ENCODE measurements at regions of chr7 and their contacts with region 1.

Region 1: GRCh38 chr7:55365675-55366460 is 731 bp downstream of the LANCL2 start:
- DNase-seq: peak; percentile 98
- H3K4me3 Mint-ChIP-seq: peak overlapping the region; percentile 96
- H3K27ac Mint-ChIP-seq: peak overlapping the region; percentile 96
- H3K4me1 Mint-ChIP-seq: peaks cover 32% of the 10 kb centered on the region
- H3K27me3 Mint-ChIP-seq: peaks cover 1% of the 10 kb centered on the region

Region 2: GRCh38 chr7:54758702-54759592 is 606.9 kb before region 1 on chr7 and contains the start of gene SEC61G:
- intact Hi-C with region 1: loop called (anchors 1 kb)
- DNase-seq: peak; percentile 99
- H3K4me3 Mint-ChIP-seq: peak within 1 kb of the TSS; percentile 97
- H3K27ac Mint-ChIP-seq: peak within 1 kb of the TSS; percentile 99
- H3K4me1 Mint-ChIP-seq: peaks cover 27% of the 10 kb centered on the region
- H3K27me3 Mint-ChIP-seq: peaks cover 14% of the 10 kb centered on the region
- total RNA-seq, gene SEC61G: 170 and 176 TPM in 2 replicates

Region 3: GRCh38 chr7:55309040-55309991 is 56.6 kb before region 1 on chr7:
- intact Hi-C with region 1: loop called (anchors 1 kb)
- DNase-seq: peak; percentile 82
- H3K4me3 Mint-ChIP-seq: peak overlapping the region; percentile 41
- H3K27ac Mint-ChIP-seq: peak overlapping the region; percentile 87
- H3K4me1 Mint-ChIP-seq: peaks cover 27% of the 10 kb centered on the region
- H3K27me3 Mint-ChIP-seq: peaks cover 4% of the 10 kb centered on the region

Region 4: GRCh38 chr7:55415173-55415778 is 49.4 kb after region 1 on chr7:
- intact Hi-C with region 1: loop called (anchors 1 kb)
- DNase-seq: peak; percentile 93
- H3K4me3 Mint-ChIP-seq: no peak overlapping the region
- H3K27ac Mint-ChIP-seq: no peak overlapping the region
- H3K4me1 Mint-ChIP-seq: peaks cover 2% of the 10 kb centered on the region
- H3K27me3 Mint-ChIP-seq: no peaks in the 10 kb centered on the region

Region 5: DNA sequence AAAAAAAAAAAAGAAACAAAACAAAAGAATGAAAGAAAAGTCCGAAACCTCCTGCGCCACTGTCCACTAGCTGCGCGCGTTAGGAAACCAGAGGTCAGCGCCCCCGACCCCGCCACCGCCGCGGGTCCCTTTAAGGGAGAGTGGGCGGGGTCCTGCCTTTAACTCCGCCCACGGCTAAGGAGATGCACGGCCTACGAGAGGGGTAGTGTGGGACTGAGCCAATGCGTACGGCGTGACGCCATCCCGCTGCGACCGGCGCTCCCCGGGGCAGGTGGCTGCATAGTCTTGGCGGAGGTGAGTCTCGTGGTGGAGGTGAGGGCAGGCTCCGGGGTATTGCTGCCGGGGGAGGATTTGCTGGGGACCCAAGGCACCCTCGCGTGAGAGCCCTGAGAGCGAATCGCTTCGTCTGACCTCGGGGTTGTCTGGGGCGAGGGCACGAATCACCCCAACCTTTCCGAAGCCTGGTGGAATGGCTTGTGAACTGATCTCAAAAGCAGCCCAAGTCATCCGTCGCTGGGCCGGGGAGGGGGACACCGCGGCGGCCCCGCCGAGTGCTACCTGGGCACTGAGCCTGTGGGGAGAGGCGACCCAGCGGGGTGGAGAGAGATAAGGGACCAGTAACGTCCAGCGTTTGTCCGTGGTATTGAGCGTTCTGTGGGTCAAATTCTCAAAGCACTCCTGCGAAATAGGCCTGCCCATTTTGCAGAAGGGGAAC is 585.9 kb after region 1 on chr7 and contains the start of gene MRPS17:
- intact Hi-C with region 1: loop called (anchors 2 kb)
- DNase-seq: peak; percentile 98
- H3K4me3 Mint-ChIP-seq: peak within 1 kb of the TSS; percentile 98
- H3K27ac Mint-ChIP-seq: peak within 1 kb of the TSS; percentile 98
- H3K4me1 Mint-ChIP-seq: peaks cover 10% of the 10 kb centered on the region
- H3K27me3 Mint-ChIP-seq: no peaks in the 10 kb centered on the region
- total RNA-seq, gene MRPS17: 36.4 and 37.6 TPM in 2 replicates

Region 6: GRCh38 chr7:56106108-56107073 is 740.5 kb after region 1 on chr7 and contains the start of gene CHCHD2:
- intact Hi-C with region 1: loop called (anchors 1 kb)
- DNase-seq: peak; percentile 98
- H3K4me3 Mint-ChIP-seq: peak within 1 kb of the TSS; percentile 95
- H3K27ac Mint-ChIP-seq: peak within 1 kb of the TSS; percentile 98
- H3K4me1 Mint-ChIP-seq: peaks cover 23% of the 10 kb centered on the region
- H3K27me3 Mint-ChIP-seq: no peaks in the 10 kb centered on the region
- total RNA-seq, gene CHCHD2: 627 and 634 TPM in 2 replicates